Ascending aorta (tissue), 2 donors: ENCODE measurements at regions of chr5 and their contacts with region 1.

Region 1: GRCh38 chr5:5492087-5492933 is 69.8 kb downstream of the ICE1 start:
- DNase-seq: no peak
- H3K4me3 ChIP-seq: no peak overlapping the region
- H3K27ac ChIP-seq: no peak overlapping the region
- H3K4me1 ChIP-seq: no peaks in the 10 kb centered on the region
- H3K27me3 ChIP-seq: no peaks in the 10 kb centered on the region
- CTCF ChIP-seq: peak in 2 of 3 experiments; percentile 65 to 82

Region 2: DNA sequence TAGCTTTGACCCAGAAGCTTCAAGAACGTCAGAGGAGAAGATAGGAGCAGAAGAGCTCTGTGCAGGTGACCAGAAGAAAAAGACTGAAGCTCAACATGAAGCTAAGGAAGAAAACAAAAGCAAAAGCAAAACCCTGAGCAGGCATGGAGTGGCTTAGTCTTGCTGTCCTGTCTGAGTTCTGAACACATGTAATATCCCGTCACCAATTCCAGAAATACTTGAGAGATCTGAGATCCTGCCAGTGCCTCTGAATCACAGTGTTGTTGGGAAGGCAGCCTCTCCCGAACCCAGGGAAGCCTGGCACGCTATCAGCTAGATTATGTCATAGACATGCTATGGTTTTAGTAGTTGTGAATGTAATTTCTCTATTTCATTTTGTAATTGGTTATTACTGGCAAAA is 165.9 kb after region 1 on chr5:
- intact Hi-C with region 1: loop called (anchors 5 kb)
- DNase-seq: peak; percentile 50 to 92
- H3K4me3 ChIP-seq: peak overlapping the region; percentile 51 to 58
- H3K27ac ChIP-seq: peak overlapping the region; percentile 71 to 76
- H3K4me1 ChIP-seq: no peaks in the 10 kb centered on the region
- H3K27me3 ChIP-seq: no peaks in the 10 kb centered on the region
- CTCF ChIP-seq: no peak

Region 3: GRCh38 chr5:5886812-5887486 is 394.6 kb after region 1 on chr5:
- intact Hi-C with region 1: loop called (anchors 10 kb)
- DNase-seq: no peak
- H3K4me3 ChIP-seq: no peak overlapping the region
- H3K27ac ChIP-seq: no peak overlapping the region
- H3K4me1 ChIP-seq: no peaks in the 10 kb centered on the region
- H3K27me3 ChIP-seq: no peaks in the 10 kb centered on the region
- CTCF ChIP-seq: peak in 1 of 3 experiments; percentile 18

Region 4: DNA sequence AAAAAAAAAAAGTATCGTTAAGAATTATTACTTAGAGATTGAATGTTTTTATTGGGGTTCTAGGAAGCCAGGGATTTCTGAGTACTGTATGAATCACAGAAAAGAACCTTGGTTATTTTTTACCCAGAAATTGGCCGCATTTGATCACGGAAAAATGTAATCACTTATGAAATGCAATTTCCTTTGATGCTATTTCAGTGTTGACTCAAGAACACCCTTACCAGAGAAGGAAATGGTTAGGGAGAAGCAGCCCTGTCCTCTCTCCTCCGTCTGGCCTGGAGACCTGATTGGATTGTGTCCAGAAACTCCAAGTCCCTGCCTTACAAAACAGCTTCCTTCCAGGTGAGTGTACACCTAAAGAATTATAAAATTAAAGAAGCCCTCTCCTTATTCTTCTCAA is 769.4 kb after region 1 on chr5:
- intact Hi-C with region 1: loop called (anchors 10 kb)
- DNase-seq: peak in 1 of 2 donors; percentile 31
- H3K4me3 ChIP-seq: no peak overlapping the region
- H3K27ac ChIP-seq: no peak overlapping the region
- H3K4me1 ChIP-seq: peaks cover 0 to 7% of the 10 kb centered on the region in 2 donors
- H3K27me3 ChIP-seq: no peaks in the 10 kb centered on the region
- CTCF ChIP-seq: no peak

Region 5: GRCh38 chr5:6448622-6449464 is 956.5 kb after region 1 on chr5 and contains the start of gene UBE2QL1:
- intact Hi-C with region 1: loop called (anchors 2 kb)
- DNase-seq: no peak
- H3K4me3 ChIP-seq: peak within 1 kb of the TSS; percentile 67 to 72
- H3K27ac ChIP-seq: peak within 1 kb of the TSS in 1 of 2 donors; percentile 40
- H3K4me1 ChIP-seq: peaks cover 0 to 14% of the 10 kb centered on the region in 2 donors
- H3K27me3 ChIP-seq: no peaks in the 10 kb centered on the region
- CTCF ChIP-seq: no peak
- total RNA-seq, gene UBE2QL1: 0.85 TPM

Region 6: GRCh38 chr5:6583049-6583880 is 1091.0 kb after region 1 on chr5:
- intact Hi-C with region 1: loop called (anchors 5 kb)
- DNase-seq: no peak
- H3K4me3 ChIP-seq: peak overlapping the region; percentile 61 to 75
- H3K27ac ChIP-seq: no peak overlapping the region
- H3K4me1 ChIP-seq: peaks cover 4 to 14% of the 10 kb centered on the region in 2 donors
- H3K27me3 ChIP-seq: no peaks in the 10 kb centered on the region
- CTCF ChIP-seq: peak in 2 of 3 experiments; percentile 48 to 64

Region 7: GRCh38 chr5:6745706-6746222 is 1253.5 kb after region 1 on chr5:
- intact Hi-C with region 1: loop called (anchors 10 kb)
- DNase-seq: peak in 1 of 2 donors; percentile 61
- H3K4me3 ChIP-seq: no peak overlapping the region
- H3K27ac ChIP-seq: peak overlapping the region in 1 of 2 donors; percentile 42
- H3K4me1 ChIP-seq: peaks cover 0 to 3% of the 10 kb centered on the region in 2 donors
- H3K27me3 ChIP-seq: no peaks in the 10 kb centered on the region
- CTCF ChIP-seq: peak; percentile 66 to 77 (median 67)